ENCODE measurements at regions of chr12 and their contacts with region 1.

Region 1: DNA sequence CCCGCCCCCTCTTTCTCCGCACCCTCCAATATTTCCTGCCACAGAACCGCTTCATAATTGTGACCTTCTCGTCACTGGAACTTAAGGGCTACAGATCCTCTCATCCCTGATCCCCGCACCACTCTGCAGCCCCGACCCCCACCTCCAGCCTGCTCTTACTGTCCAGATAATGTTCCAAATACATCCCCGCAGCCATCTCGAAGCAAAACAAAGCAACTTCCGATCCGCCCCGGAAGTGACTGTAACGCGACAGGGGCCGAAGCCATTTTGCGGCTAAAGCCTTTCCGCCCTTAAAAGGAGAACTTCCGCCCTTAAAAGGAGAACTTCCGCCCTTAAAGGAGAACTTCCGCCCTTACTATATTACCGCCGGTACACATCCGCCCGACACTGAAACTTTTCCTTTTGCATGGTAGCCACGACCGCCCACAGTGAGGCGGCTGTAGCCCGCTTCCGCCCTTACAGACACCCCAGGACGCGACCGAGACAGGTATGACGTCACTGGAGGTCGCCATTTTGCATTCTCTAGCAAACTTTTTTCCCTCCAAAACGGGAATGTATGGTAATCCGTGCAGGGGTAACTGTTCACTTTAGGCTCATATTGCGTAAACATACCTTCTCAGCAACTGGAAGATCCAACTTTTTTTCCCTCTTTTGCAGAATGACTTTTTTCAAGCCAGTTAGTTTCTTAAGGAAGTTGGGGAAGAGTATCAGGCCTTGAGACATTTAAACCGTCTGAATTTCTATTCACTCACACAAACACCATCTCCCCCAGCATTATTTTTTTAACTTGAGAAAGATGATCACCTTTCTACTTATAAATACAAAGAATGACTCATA is at the start of gene ING4:
- DNase-seq: peak; percentile 95 to 100 (median 97)

Region 2: GRCh38 chr12:6613776-6614512 is 49.2 kb before region 1 on chr12:
- intact Hi-C with region 1: loop called (anchors 5 kb)
- DNase-seq: peak; percentile 79 to 98 (median 86)

Region 3: DNA sequence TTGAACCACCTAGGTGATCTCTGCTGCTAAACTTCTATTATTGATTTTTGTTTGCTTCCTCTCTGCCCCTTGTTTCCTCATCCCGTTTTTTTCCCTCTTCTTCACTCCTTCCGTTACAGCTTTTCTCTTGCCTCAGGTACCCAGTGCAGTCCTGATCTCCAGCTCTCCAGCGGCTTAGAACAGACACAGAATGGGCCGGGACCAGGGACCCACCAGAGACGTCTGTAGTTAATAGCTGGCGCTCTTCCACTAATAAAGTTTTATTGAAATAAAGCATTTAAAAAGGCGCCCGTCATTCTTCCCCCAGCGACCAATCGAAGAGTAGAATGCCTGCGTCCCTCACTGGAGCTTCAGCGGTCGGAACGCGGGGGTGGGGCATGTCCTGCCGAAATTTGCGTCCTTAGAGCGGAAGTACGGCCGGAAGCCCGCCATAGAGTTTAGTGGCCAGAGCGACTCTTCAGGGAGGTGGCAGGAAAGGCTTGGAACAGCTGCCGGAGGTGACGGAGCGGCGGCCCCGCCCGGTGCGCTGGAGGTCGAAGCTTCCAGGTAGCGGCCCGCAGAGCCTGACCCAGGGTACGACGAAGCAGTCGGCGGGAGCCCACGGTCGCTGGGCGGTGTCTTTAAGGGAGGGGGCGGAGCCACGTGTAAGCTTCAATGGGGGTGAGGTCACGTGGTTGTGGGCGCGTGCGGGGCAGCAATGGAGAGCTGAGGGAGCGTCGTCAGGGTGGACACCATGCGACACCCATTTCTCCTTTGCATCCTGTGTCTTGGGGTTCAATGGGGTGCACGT is 60.7 kb after region 1 on chr12 and contains the start of gene COPS7A:
- intact Hi-C with region 1: loop called (anchors 1 kb)
- DNase-seq: peak; percentile 97 to 100 (median 99)

Region 4: GRCh38 chr12:6944381-6945186 is 281.5 kb after region 1 on chr12:
- intact Hi-C with region 1: no loop called
- DNase-seq: peak; percentile 87 to 99 (median 93)